ENCODE measurements at regions of chr3 and their contacts with region 1.

Region 1: GRCh38 chr3:160027541-160028195 is 39.0 kb downstream of the IL12A start:
- DNase-seq: no peak
- ATAC-seq: 0 out of 2 replicates have a peak, but pooled peaks have one; percentile 15
- H3K4me3 ChIP-seq: no peak overlapping the region
- H3K27ac ChIP-seq: no peak overlapping the region
- H3K4me1 ChIP-seq: peaks cover 0 to 14% of the 10 kb centered on the region in 2 experiments; a peak in 2 of 4 replicates
- H3K27me3 ChIP-seq: no peaks in the 10 kb centered on the region
- CTCF ChIP-seq: no peak
- POLR2A ChIP-seq: no peak
- RAD21 ChIP-seq: no peak

Region 2: GRCh38 chr3:160052385-160053047 is 24.8 kb after region 1 on chr3:
- CTCF ChIA-PET with region 1: interaction called, 11 read pairs
- POLR2A ChIA-PET with region 1: no interaction called
- RAD21 ChIA-PET with region 1: no interaction called
- intact Hi-C with region 1: no loop called
- DNase-seq: no peak
- ATAC-seq: no peak
- H3K4me3 ChIP-seq: no peak overlapping the region
- H3K27ac ChIP-seq: no peak overlapping the region
- H3K4me1 ChIP-seq: no peaks in the 10 kb centered on the region
- H3K27me3 ChIP-seq: no peaks in the 10 kb centered on the region
- CTCF ChIP-seq: no peak
- POLR2A ChIP-seq: no peak
- RAD21 ChIP-seq: no peak

Region 3: GRCh38 chr3:160065282-160065681 is 37.6 kb after region 1 on chr3:
- CTCF ChIA-PET with region 1: no interaction called
- POLR2A ChIA-PET with region 1: no interaction called
- RAD21 ChIA-PET with region 1: no interaction called
- intact Hi-C with region 1: no loop called
- DNase-seq: no peak
- ATAC-seq: no peak
- H3K4me3 ChIP-seq: no peak overlapping the region
- H3K27ac ChIP-seq: no peak overlapping the region
- H3K4me1 ChIP-seq: no peaks in the 10 kb centered on the region
- H3K27me3 ChIP-seq: no peaks in the 10 kb centered on the region
- CTCF ChIP-seq: no peak
- POLR2A ChIP-seq: no peak
- RAD21 ChIP-seq: no peak

Region 4: DNA sequence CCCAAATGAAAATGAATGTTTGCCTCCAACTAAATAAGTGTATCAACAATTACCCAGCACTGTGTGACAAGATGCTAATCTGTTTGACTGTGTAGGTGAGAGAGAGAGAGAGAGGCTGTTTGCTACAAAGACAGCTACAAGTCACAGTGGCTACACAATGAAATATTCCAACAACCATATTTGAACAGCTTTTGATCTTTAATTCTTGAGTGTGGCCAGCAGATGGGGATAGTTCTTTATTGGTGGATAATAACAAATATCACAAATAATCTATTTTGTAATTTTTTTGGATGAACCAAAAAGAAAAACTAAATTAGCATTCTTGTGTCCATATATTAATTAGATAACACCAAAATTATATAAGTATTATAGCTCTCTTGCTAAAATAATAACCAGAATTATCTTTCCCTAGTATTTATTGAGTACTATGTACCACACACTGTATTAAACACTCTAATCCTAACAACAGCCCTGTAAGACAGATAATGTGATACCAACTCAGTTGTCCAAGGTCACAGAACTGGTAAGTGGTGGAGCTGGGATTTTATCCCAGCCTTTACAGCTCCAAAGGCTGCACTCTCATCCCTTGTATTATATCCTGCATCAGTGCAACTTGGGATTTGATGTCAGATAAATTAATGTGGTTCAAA is 135.7 kb after region 1 on chr3:
- CTCF ChIA-PET with region 1: interaction called, 18 read pairs
- POLR2A ChIA-PET with region 1: no interaction called
- RAD21 ChIA-PET with region 1: interaction called in 1 of 2 experiments, 3 read pairs
- intact Hi-C with region 1: no loop called
- DNase-seq: peak; percentile 23
- ATAC-seq: peak; percentile 75
- H3K4me3 ChIP-seq: no peak overlapping the region
- H3K27ac ChIP-seq: no peak overlapping the region
- H3K4me1 ChIP-seq: no peaks in the 10 kb centered on the region
- H3K27me3 ChIP-seq: no peaks in the 10 kb centered on the region
- CTCF ChIP-seq: peak; percentile 26 to 73 (median 54); a peak in 4 of 6 replicates
- POLR2A ChIP-seq: no peak
- RAD21 ChIP-seq: peak; percentile 80

Region 5: DNA sequence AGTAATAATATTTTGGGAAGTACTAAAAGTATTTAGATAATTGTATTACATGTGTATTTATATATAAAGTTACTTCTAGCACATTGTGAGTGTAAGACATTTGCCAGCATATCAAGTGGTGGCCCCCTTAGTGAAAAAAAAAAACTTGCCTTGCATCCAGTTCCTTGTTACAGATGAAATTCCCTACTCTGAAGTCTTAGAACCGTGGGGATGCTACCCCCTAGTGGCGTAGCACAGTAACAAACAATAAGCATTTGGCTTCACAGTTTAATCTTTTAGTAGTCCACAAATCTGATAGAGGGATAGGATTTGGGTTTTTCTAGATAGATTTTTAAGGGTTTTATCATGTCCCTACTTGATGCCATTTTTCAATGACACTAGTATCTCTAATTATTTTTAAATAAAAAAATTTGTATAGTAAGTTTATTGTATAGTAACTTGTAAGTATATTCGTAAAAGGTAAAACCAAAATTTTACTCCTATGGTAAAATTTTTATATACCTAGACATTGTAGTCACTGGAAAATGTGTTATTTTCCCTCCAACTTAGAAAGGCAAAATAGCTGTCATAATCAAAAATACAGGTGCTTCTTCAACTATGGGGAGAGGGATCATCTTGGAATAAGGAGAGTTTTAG is 386.1 kb after region 1 on chr3:
- CTCF ChIA-PET with region 1: interaction called, 16 read pairs
- POLR2A ChIA-PET with region 1: no interaction called
- RAD21 ChIA-PET with region 1: no interaction called
- intact Hi-C with region 1: loop called (anchors 1 kb)
- DNase-seq: peak; percentile 60
- ATAC-seq: peak; percentile 89
- H3K4me3 ChIP-seq: no peak overlapping the region
- H3K27ac ChIP-seq: no peak overlapping the region
- H3K4me1 ChIP-seq: no peaks in the 10 kb centered on the region
- H3K27me3 ChIP-seq: no peaks in the 10 kb centered on the region
- CTCF ChIP-seq: peak; percentile 72 to 84 (median 80)
- POLR2A ChIP-seq: no peak
- RAD21 ChIP-seq: peak; percentile 80